CD4-positive, alpha-beta memory T cell (primary cell): ENCODE measurements at regions of chrX and their contacts with region 1.

Region 1: GRCh38 chrX:24081661-24082264 is 27.0 kb downstream of the EIF2S3 start:
- DNase-seq: peak; percentile 44 to 55 (median 53)
- H3K4me3 ChIP-seq: no peak overlapping the region
- H3K4me3 Mint-ChIP-seq: peak overlapping the region in 2 of 8 donors; percentile 36 to 39
- H3K27ac ChIP-seq: no peak overlapping the region
- H3K27ac Mint-ChIP-seq: no peak overlapping the region
- H3K4me1 ChIP-seq: no peaks in the 10 kb centered on the region
- H3K4me1 Mint-ChIP-seq: peaks cover 0 to 10% (median 5%) of the 10 kb centered on the region in 4 donors
- H3K27me3 ChIP-seq: no peaks in the 10 kb centered on the region
- H3K27me3 Mint-ChIP-seq: no peaks in the 10 kb centered on the region

Region 2: GRCh38 chrX:24063488-24063887 is 18.3 kb before region 1 on chrX:
- CTCF ChIA-PET with region 1: no interaction called
- POLR2A ChIA-PET with region 1: interaction called, 3 read pairs
- intact Hi-C with region 1: loop called (anchors 2 kb)
- DNase-seq: no peak
- H3K4me3 ChIP-seq: no peak overlapping the region
- H3K4me3 Mint-ChIP-seq: no peak overlapping the region
- H3K27ac ChIP-seq: no peak overlapping the region
- H3K27ac Mint-ChIP-seq: no peak overlapping the region
- H3K4me1 ChIP-seq: no peaks in the 10 kb centered on the region
- H3K4me1 Mint-ChIP-seq: peaks cover 0 to 4% (median 1%) of the 10 kb centered on the region in 4 donors
- H3K27me3 ChIP-seq: no peaks in the 10 kb centered on the region
- H3K27me3 Mint-ChIP-seq: no peaks in the 10 kb centered on the region

Region 3: GRCh38 chrX:24241822-24242648 is 160.3 kb after region 1 on chrX:
- CTCF ChIA-PET with region 1: interaction called, 11 read pairs
- POLR2A ChIA-PET with region 1: no interaction called
- intact Hi-C with region 1: loop called (anchors 1 kb)
- DNase-seq: peak in 4 of 5 donors; percentile 24 to 32 (median 30)
- H3K4me3 ChIP-seq: no peak overlapping the region
- H3K4me3 Mint-ChIP-seq: no peak overlapping the region
- H3K27ac ChIP-seq: no peak overlapping the region
- H3K27ac Mint-ChIP-seq: peak overlapping the region in 1 of 7 donors; percentile 19
- H3K4me1 ChIP-seq: no peaks in the 10 kb centered on the region
- H3K4me1 Mint-ChIP-seq: no peaks in the 10 kb centered on the region
- H3K27me3 ChIP-seq: no peaks in the 10 kb centered on the region
- H3K27me3 Mint-ChIP-seq: no peaks in the 10 kb centered on the region

Region 4: DNA sequence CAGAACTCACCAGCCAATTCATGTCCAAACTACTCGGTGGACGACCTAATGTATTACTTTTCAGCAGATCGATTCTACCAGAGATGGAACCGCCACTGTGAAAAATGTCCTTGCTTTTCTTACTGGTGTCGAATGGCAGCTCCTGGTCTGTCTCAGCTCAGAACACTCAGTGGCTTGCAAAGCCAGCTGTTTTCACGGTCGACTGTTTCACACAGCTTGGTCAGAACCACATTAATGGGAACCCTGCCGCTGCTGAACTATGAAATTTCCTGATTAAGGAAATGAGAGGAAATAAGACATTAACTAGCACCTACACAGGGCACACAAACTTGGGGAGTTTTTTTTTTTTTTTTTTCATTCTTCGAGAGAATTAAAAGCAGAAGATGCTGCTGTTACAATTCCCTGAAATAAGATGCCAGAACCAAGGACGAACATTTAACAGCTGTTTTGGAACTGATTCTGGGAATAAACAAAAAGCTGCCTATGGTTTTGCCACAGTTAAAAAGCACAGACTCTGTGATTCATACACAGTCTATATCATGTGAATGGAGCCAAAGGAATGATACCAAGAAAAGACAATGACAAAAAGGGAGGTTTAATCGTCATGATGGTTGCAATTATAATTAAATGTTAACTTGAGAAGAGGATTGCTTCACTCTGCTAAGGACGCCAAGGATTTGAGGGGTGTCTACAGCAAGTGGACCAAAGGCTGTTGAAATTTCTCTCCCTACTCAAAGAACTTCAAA is 200.8 kb after region 1 on chrX:
- CTCF ChIA-PET with region 1: no interaction called
- POLR2A ChIA-PET with region 1: no interaction called
- intact Hi-C with region 1: no loop called
- DNase-seq: no peak
- H3K4me3 ChIP-seq: no peak overlapping the region
- H3K4me3 Mint-ChIP-seq: no peak overlapping the region
- H3K27ac ChIP-seq: no peak overlapping the region
- H3K27ac Mint-ChIP-seq: no peak overlapping the region
- H3K4me1 ChIP-seq: no peaks in the 10 kb centered on the region
- H3K4me1 Mint-ChIP-seq: peaks cover 0 to 5% (median 0%) of the 10 kb centered on the region in 4 donors
- H3K27me3 ChIP-seq: no peaks in the 10 kb centered on the region
- H3K27me3 Mint-ChIP-seq: peaks cover 4 to 6% of the 10 kb centered on the region in 2 donors